ENCODE measurements at regions of chr3 and their contacts with region 1.

Region 1: GRCh38 chr3:13452490-13453335 is 27.4 kb upstream of the HDAC11 start:
- DNase-seq: peak in 1 of 2 donors; percentile 26
- ATAC-seq: peak; percentile 55

Region 2: DNA sequence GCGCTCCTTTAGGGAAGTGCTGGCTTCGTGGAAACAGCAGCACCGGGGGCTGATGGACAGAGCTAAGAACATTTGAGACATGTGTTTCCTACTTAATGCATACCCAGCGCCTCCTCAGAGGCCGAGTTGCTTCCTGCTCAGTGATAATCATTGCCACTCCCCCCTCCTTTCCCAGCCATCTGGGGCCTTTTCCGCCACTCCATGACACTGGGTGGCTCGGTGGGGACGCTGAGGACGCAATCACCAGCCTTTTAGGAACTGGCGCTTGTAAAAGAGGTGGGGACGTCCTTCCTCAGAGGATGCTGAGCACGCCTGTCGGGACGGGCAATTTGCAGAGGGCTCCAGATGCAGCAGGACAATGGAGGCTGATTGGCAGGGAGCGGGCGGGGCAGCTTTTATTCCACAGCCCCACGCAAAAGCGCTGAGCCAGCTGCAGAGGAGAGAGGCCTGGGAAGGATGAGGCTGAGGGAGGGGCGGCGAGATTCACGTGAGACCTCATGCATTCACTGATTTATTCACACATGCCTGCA is 357.2 kb before region 1 on chr3:
- intact Hi-C with region 1: loop called in 1 of 2 experiments (anchors 5 kb)
- DNase-seq: no peak
- ATAC-seq: no peak

Measured in left colon (tissue), 2 donors.